Posterior vena cava (tissue), 2 donors: ENCODE measurements at regions of chr4 and their contacts with region 1.

Region 1: GRCh38 chr4:81351654-81352445 is 119.9 kb downstream of the RASGEF1B start:
- DNase-seq: peak; percentile 84

Region 2: DNA sequence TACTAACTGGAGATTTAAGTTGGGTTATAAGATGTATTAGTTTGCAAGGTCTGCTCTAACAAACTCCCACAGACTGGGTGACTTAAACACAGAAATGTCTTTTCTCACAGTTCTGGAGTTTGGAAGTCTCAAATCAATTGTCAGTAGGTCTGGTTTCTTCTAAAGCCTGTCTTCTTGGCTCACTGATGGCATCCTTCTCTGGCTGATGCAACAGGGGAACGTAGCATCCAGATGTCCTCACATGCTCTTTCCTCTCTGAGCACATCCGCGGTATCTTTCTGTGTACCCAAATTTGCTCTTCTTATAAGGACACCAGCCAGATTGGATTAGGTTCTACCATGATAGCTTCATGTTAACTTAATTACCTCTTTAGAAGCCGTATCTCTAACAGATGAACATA is 384.5 kb before region 1 on chr4:
- intact Hi-C with region 1: loop called in 1 of 2 experiments (anchors 10 kb)
- DNase-seq: no peak

Region 3: DNA sequence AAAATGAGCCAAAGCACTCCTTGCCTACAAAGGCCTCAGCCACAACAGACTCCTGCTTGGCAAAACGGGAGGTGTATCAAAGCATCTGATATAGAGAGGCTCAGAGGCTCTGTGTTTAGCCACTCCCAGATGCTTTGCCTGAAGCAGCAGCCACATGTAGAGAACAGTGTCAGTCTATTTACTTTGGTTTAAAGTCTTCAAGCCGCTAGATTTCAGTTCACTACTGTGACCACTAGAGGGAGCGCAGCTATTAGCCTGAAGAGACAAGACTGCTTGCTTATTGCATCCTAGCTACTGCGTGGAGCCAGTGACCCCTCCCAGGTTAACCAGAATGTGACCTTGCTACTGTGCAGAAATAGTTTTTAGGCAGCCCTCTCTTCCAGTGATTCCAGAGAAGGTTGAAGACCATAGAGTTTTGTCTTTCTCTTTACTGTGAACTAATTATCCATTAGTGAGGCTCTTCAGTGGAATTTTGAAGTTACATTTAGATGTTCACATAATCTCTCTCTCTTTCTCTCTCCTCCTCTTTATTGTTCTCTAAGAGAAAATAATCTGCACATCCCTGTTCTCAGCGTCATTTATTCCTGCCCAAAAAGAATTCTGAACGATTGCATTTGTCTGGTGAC is 282.0 kb before region 1 on chr4:
- intact Hi-C with region 1: loop called in 1 of 2 experiments (anchors 10 kb)
- DNase-seq: peak; percentile 68

Region 4: GRCh38 chr4:81326581-81326980 is 25.3 kb before region 1 on chr4:
- intact Hi-C with region 1: no loop called
- DNase-seq: no peak